A673 (cell line): ENCODE measurements at regions of chr3 and their contacts with region 1.

Region 1: DNA sequence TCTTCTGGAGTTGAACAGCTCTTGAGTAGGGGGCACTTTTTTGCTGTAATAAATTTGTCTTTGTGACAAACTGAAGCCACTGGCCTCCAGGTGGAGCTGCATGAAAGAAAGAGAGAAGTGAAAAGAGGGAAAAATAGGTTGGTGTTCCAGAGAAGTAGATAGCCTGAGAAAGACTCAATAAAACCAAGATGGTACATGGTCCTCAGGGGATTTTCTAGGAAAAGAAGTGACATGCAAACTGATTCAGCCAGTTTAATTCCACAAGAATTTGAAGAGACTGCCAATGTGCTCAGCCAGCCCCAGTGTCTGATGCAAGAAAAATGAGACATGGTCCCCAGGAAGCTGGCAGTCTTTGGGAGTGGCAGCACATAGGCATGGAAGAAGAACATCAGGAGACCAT is 152.7 kb downstream of the CD47 start:
- DNase-seq: peak; percentile 53
- H3K4me3 ChIP-seq: no peak overlapping the region
- H3K27ac ChIP-seq: no peak overlapping the region
- H3K4me1 ChIP-seq: no peaks in the 10 kb centered on the region
- H3K27me3 ChIP-seq: peaks cover 9% of the 10 kb centered on the region
- CTCF ChIP-seq: peak; percentile 59

Region 2: DNA sequence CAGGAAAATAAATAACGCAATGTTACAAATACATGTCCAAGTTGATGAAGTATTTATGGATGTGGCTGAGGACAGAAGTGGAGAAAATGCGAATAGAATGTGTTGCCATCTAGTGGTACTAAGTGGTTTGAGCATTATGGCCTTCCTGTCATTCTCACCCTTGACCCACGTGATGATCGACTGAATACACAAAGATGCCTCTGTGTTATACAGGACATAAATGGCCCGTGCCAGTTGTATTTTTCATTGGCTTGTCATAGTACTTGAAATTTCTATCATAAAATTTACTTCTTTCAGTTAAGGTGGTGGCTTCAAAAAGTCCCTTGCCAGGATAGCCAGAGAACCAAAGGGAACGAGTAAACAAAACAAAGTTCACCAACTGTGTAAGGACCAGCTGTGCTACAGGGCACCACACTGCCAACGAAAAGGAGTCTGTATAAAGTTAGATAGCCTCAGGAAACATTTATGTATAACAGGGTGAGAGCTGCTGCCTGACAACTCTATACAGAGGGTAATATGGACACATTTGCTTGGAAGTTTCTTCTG is 468.6 kb after region 1 on chr3:
- CTCF ChIA-PET with region 1: no interaction called
- POLR2A ChIA-PET with region 1: no interaction called
- intact Hi-C with region 1: loop called (anchors 5 kb)
- DNase-seq: peak; percentile 72
- H3K4me3 ChIP-seq: no peak overlapping the region
- H3K27ac ChIP-seq: no peak overlapping the region
- H3K4me1 ChIP-seq: peaks cover 6% of the 10 kb centered on the region
- H3K27me3 ChIP-seq: no peaks in the 10 kb centered on the region
- CTCF ChIP-seq: peak; percentile 83